Vagina (tissue), 2 donors: ENCODE measurements at regions of chr16 and their contacts with region 1.

Region 1: GRCh38 chr16:29926005-29926710 is at the start of gene KCTD13:
- DNase-seq: no peak
- H3K4me3 ChIP-seq: peak within 1 kb of the TSS; percentile 84 to 88
- H3K27ac ChIP-seq: peak within 1 kb of the TSS; percentile 83
- H3K4me1 ChIP-seq: peaks cover 31% of the 10 kb centered on the region
- H3K27me3 ChIP-seq: no peaks in the 10 kb centered on the region
- CTCF ChIP-seq: no peak
- POLR2A ChIP-seq: peak in 1 of 2 donors; percentile 92
- total RNA-seq, gene KCTD13: 20.4 TPM

Region 2: DNA sequence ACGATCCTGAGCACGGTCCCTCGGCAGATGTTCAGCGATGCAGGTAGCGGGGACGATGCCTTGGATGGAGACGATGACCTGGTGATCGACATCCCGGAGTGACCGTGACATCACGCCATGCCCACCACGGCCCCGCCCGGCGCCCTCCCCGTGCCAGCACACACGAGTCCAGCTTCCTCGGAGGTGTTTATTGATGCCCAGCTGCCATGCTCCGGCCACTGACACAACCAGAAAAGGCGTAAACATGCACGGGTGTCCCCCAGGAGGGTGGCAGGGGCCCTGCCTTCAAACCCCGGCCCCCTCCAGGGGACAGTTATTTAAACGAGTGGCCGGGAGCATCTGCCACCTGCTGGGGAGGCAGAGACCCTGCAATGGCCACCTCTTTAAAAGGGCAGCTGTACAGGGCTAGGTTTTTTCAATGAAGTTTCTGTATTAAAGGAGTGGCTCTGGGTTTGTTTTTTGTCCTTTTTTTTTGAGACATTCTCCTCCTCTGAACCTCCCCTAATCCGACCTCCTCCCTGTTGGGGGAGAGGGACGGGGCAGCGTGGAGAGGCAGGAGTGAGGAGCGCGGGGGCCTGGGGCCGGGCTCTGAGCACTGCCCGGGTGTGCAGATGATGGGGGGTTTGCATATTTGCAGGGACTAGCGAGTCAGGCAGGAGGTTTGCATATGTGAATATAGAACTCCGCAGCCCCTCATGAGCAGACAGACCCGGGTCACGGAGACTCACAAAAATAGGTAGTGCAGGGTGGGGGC is 79.4 kb after region 1 on chr16:
- intact Hi-C with region 1: loop called (anchors 10 kb)
- DNase-seq: no peak
- H3K4me3 ChIP-seq: no peak overlapping the region
- H3K27ac ChIP-seq: no peak overlapping the region
- H3K4me1 ChIP-seq: peaks cover 6% of the 10 kb centered on the region
- H3K27me3 ChIP-seq: peaks cover 4% of the 10 kb centered on the region
- CTCF ChIP-seq: peak in 2 of 3 experiments; percentile 52 to 70
- POLR2A ChIP-seq: no peak